Ovary (tissue), 10 donors: ENCODE measurements at regions of chr1 and their contacts with region 1.

Region 1: GRCh38 chr1:113849060-113849459 is 22.5 kb downstream of the PTPN22 start:
- DNase-seq: no peak
- H3K4me3 ChIP-seq: no peak overlapping the region
- H3K27ac ChIP-seq: no peak overlapping the region
- H3K4me1 ChIP-seq: no peaks in the 10 kb centered on the region
- H3K27me3 ChIP-seq: no peaks in the 10 kb centered on the region
- CTCF ChIP-seq: no peak
- EP300 ChIP-seq: no peak
- POLR2A ChIP-seq: no peak

Region 2: GRCh38 chr1:113714606-113715275 is 134.3 kb before region 1 on chr1:
- intact Hi-C with region 1: no loop called
- DNase-seq: no peak
- H3K4me3 ChIP-seq: no peak overlapping the region
- H3K27ac ChIP-seq: no peak overlapping the region
- H3K4me1 ChIP-seq: no peaks in the 10 kb centered on the region
- H3K27me3 ChIP-seq: no peaks in the 10 kb centered on the region
- CTCF ChIP-seq: no peak
- EP300 ChIP-seq: no peak
- POLR2A ChIP-seq: no peak

Region 3: DNA sequence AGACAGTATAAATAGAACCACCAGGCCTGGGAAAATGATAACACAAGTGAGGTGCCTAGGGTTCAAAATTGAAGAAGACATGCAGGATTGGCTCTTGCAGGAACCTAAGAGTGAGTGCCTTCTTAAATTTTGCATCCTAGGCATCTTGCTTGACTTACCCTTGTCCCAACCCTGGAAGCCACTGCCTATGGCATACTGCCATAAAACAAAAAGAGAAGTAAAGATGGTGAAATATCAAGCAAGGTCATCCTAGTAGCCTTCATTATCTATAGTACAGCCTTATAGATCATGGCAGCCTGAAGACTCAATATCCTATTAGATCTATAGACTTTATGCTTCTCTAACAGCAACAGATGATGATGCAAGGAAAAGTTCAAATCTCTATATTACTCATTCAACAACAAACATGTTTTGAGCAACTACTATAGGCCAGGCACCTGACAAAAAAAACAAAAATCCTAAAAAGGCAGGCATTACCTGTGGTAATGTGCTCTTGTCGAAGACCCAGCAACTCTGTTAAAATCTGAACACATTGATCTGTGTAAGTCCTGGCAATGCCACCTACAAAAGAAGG is 49.3 kb after region 1 on chr1:
- intact Hi-C with region 1: loop called in 1 of 4 experiments (anchors 10 kb)
- DNase-seq: no peak
- H3K4me3 ChIP-seq: no peak overlapping the region
- H3K27ac ChIP-seq: no peak overlapping the region
- H3K4me1 ChIP-seq: no peaks in the 10 kb centered on the region
- H3K27me3 ChIP-seq: no peaks in the 10 kb centered on the region
- CTCF ChIP-seq: no peak
- EP300 ChIP-seq: no peak
- POLR2A ChIP-seq: no peak

Region 4: DNA sequence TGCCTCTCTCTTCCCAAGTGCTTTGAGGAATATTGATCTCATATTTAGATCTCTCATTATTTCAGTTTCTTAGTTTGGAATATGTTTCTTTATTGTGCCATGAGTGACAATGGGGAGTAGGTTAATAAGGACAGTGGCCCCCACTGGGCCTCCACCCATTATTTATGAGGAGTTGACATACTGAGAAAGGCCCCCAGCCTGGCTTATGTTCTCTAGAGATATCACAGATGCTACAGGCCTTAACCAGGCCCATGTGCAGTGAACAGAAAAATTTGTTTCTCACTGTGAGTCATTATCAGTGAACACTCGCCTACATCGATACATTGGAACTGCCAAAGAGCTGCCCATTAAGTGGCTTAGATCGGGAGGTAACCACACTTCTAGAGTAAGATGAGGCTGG is 340.3 kb after region 1 on chr1:
- intact Hi-C with region 1: no loop called
- DNase-seq: no peak
- H3K4me3 ChIP-seq: no peak overlapping the region
- H3K27ac ChIP-seq: no peak overlapping the region
- H3K4me1 ChIP-seq: no peaks in the 10 kb centered on the region
- H3K27me3 ChIP-seq: no peaks in the 10 kb centered on the region
- CTCF ChIP-seq: no peak
- EP300 ChIP-seq: no peak
- POLR2A ChIP-seq: no peak